Activated B cell treated with CpG ODN at 0.5 μM for 24 hours (primary cell): ENCODE measurements at regions of chr20 and their contacts with region 1.

Region 1: DNA sequence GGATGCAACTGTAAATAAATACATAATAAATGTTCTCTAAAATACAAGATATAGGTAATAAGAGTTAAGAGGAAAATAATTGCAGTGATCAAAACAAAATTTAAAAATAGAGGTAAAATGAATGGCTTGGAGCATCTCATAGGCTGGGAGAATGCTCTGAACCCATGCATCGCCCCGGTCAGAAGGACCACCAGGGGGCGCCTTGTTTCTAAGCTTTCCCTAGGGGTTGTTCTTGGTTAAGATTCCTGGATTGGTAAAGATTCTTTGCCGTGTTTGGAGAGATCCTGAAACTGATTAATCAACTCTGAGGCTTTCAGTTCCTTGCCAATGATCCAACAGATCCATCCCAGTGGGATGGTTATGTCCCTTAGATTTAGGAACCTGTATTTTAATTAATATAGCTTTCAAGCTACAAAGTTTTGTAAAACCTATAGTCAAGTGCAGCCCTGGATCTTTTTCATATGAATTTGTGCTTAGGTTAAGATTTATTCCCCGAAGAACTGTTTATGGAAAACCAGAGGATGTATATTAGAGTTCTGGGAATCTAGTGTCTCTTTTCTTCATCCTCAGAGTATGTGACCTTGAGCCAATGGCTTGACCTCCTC is 45.3 kb upstream of the PRELID3B start:
- DNase-seq: peak; percentile 70
- ATAC-seq: peak; percentile 82
- H3K4me3 Mint-ChIP-seq: no peak overlapping the region
- H3K27ac Mint-ChIP-seq: peak overlapping the region; percentile 5
- H3K4me1 Mint-ChIP-seq: peaks cover 12% of the 10 kb centered on the region
- H3K27me3 Mint-ChIP-seq: peaks cover 14% of the 10 kb centered on the region
- CTCF ChIP-seq: peak; percentile 55

Region 2: GRCh38 chr20:59165891-59166709 is 78.2 kb after region 1 on chr20:
- CTCF ChIA-PET with region 1: interaction called, 6 read pairs
- POLR2A ChIA-PET with region 1: interaction called, 4 read pairs
- intact Hi-C with region 1: loop called (anchors 1 kb)
- DNase-seq: no peak
- ATAC-seq: no peak
- H3K4me3 Mint-ChIP-seq: peak overlapping the region; percentile 71
- H3K27ac Mint-ChIP-seq: peak overlapping the region; percentile 92
- H3K4me1 Mint-ChIP-seq: peaks cover 60% of the 10 kb centered on the region
- H3K27me3 Mint-ChIP-seq: no peaks in the 10 kb centered on the region
- CTCF ChIP-seq: no peak

Region 3: GRCh38 chr20:59182401-59183044 is 94.6 kb after region 1 on chr20:
- CTCF ChIA-PET with region 1: interaction called, 10 read pairs
- POLR2A ChIA-PET with region 1: no interaction called
- intact Hi-C with region 1: no loop called
- DNase-seq: no peak
- ATAC-seq: peak; percentile 76
- H3K4me3 Mint-ChIP-seq: peak overlapping the region; percentile 38
- H3K27ac Mint-ChIP-seq: no peak overlapping the region
- H3K4me1 Mint-ChIP-seq: peaks cover 48% of the 10 kb centered on the region
- H3K27me3 Mint-ChIP-seq: no peaks in the 10 kb centered on the region
- CTCF ChIP-seq: no peak

Region 4: GRCh38 chr20:59207742-59208357 is 119.9 kb after region 1 on chr20:
- CTCF ChIA-PET with region 1: interaction called, 258 read pairs
- POLR2A ChIA-PET with region 1: interaction called, 10 read pairs
- intact Hi-C with region 1: loop called (anchors 1 kb)
- DNase-seq: peak; percentile 59
- ATAC-seq: peak; percentile 100
- H3K4me3 Mint-ChIP-seq: no peak overlapping the region
- H3K27ac Mint-ChIP-seq: peak overlapping the region; percentile 30
- H3K4me1 Mint-ChIP-seq: peaks cover 6% of the 10 kb centered on the region
- H3K27me3 Mint-ChIP-seq: no peaks in the 10 kb centered on the region
- CTCF ChIP-seq: no peak

Region 5: GRCh38 chr20:59403261-59403961 is 315.5 kb after region 1 on chr20:
- CTCF ChIA-PET with region 1: interaction called, 5 read pairs
- POLR2A ChIA-PET with region 1: no interaction called
- intact Hi-C with region 1: loop called (anchors 10 kb)
- DNase-seq: peak; percentile 52
- ATAC-seq: peak; percentile 57
- H3K4me3 Mint-ChIP-seq: no peak overlapping the region
- H3K27ac Mint-ChIP-seq: no peak overlapping the region
- H3K4me1 Mint-ChIP-seq: peaks cover 4% of the 10 kb centered on the region
- H3K27me3 Mint-ChIP-seq: peaks cover 30% of the 10 kb centered on the region
- CTCF ChIP-seq: peak; percentile 47